Heart right ventricle (tissue), 16 donors: ENCODE measurements at regions of chr17 and their contacts with region 1.

Region 1: GRCh38 chr17:65463242-65463641 is 98.2 kb downstream of the AXIN2 start:
- DNase-seq: peak; percentile 50 to 66
- ATAC-seq: peak; percentile 86 to 99 (median 96)
- H3K4me3 ChIP-seq: no peak overlapping the region
- H3K27ac ChIP-seq: peak overlapping the region; percentile 43 to 86 (median 66)
- H3K4me1 ChIP-seq: peaks cover 0 to 8% (median 0%) of the 10 kb centered on the region in 9 donors
- H3K27me3 ChIP-seq: peaks cover 0 to 3% (median 0%) of the 10 kb centered on the region in 7 donors
- CTCF ChIP-seq: no peak

Region 2: GRCh38 chr17:64622931-64623654 is 840.1 kb before region 1 on chr17:
- intact Hi-C with region 1: no loop called
- DNase-seq: no peak
- ATAC-seq: peak in 6 of 8 donors; percentile 27 to 75 (median 64)
- H3K4me3 ChIP-seq: no peak overlapping the region
- H3K27ac ChIP-seq: peak overlapping the region in 2 of 10 donors; percentile 52 to 71
- H3K4me1 ChIP-seq: peaks cover 2 to 63% (median 41%) of the 10 kb centered on the region in 9 donors
- H3K27me3 ChIP-seq: no peaks in the 10 kb centered on the region
- CTCF ChIP-seq: no peak

Region 3: GRCh38 chr17:65154770-65155621 is 308.2 kb before region 1 on chr17:
- intact Hi-C with region 1: no loop called
- DNase-seq: no peak
- ATAC-seq: no peak
- H3K4me3 ChIP-seq: no peak overlapping the region
- H3K27ac ChIP-seq: no peak overlapping the region
- H3K4me1 ChIP-seq: peaks cover 0 to 12% (median 0%) of the 10 kb centered on the region in 9 donors
- H3K27me3 ChIP-seq: peaks cover 0 to 7% (median 0%) of the 10 kb centered on the region in 7 donors
- CTCF ChIP-seq: no peak

Region 4: DNA sequence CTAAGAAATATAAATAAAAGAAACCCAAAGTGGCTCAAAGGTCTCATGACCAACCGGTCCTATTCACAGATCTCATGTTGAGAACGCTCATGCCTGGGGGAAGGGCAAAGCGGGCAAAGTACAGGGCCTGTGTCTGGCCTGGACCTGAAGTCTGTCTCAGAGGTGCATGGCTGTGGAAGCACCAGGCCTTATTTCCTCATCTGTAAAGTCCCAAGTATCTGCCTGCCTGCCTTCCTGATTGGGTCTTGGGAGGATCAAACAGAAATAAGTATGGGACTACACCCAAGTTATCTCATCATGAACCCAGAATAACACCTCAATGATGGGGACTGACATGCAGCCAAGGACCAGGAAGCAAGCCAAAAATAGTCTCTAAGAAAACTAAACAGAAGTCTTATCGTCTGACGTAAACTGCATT is 84.0 kb after region 1 on chr17:
- intact Hi-C with region 1: loop called in 1 of 10 experiments (anchors 2 kb)
- DNase-seq: peak in 1 of 2 donors; percentile 65
- ATAC-seq: peak; percentile 36 to 89 (median 82)
- H3K4me3 ChIP-seq: no peak overlapping the region
- H3K27ac ChIP-seq: peak overlapping the region; percentile 29 to 87 (median 80)
- H3K4me1 ChIP-seq: peaks cover 5 to 75% (median 60%) of the 10 kb centered on the region in 9 donors
- H3K27me3 ChIP-seq: no peaks in the 10 kb centered on the region
- CTCF ChIP-seq: no peak

Region 5: DNA sequence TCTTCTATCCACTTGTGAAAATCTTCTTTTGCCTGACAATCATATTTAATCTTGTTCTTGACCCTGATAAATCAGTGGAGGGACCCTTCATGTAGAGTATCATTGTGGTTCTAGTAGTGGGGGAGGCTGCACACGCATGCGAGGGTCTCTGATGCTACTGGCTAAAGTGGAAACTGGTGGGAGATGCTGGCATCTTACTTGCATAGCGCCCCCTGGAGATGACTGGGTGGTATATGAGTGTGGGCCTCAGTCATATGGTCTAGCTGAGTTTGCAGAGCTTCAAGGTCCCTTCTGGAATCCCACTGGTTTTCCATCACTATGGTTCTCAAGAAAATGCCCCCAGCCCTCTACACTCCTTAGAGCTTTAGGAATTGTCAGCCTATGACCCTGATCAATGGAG is 334.6 kb after region 1 on chr17:
- intact Hi-C with region 1: no loop called
- DNase-seq: no peak
- ATAC-seq: no peak
- H3K4me3 ChIP-seq: no peak overlapping the region
- H3K27ac ChIP-seq: no peak overlapping the region
- H3K4me1 ChIP-seq: no peaks in the 10 kb centered on the region
- H3K27me3 ChIP-seq: no peaks in the 10 kb centered on the region
- CTCF ChIP-seq: peak in 3 of 9 donors; percentile 22 to 29 (median 29)

Region 6: GRCh38 chr17:66255112-66255511 is 791.9 kb after region 1 on chr17:
- intact Hi-C with region 1: no loop called
- DNase-seq: peak in 1 of 2 donors; percentile 36
- ATAC-seq: peak in 7 of 8 donors; percentile 58 to 82 (median 68)
- H3K4me3 ChIP-seq: no peak overlapping the region
- H3K27ac ChIP-seq: no peak overlapping the region
- H3K4me1 ChIP-seq: peaks cover 0 to 3% (median 0%) of the 10 kb centered on the region in 9 donors
- H3K27me3 ChIP-seq: no peaks in the 10 kb centered on the region
- CTCF ChIP-seq: peak; percentile 32 to 83 (median 70)